HCT116 (cell line): ENCODE measurements at regions of chr7 and their contacts with region 1.

Region 1: DNA sequence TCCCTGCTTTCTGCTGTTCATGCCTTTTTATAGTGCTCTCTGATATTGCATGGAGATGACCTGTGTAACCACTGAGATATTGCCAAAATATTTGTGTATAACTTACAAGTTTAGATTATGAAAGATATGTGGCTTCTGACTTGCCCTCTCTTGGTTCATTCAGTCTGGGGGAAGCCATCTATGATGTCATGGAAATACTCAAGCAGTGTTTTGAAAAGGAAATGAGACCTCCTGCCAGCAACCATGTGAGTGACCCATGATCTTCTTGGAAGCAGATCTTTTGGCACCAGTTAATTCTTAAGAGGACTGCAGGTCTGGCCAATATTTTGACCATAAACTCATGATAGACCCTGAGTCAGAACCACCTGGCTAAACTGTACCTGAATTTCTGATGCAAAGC is 183.0 kb downstream of the THSD7A start:
- DNase-seq: no peak
- ATAC-seq: no peak
- H3K4me3 ChIP-seq: no peak overlapping the region
- H3K27ac ChIP-seq: no peak overlapping the region
- H3K4me1 ChIP-seq: no peaks in the 10 kb centered on the region
- H3K27me3 ChIP-seq: no peaks in the 10 kb centered on the region
- CTCF ChIP-seq: no peak
- POLR2A ChIP-seq: no peak
- RAD21 ChIP-seq: no peak

Region 2: DNA sequence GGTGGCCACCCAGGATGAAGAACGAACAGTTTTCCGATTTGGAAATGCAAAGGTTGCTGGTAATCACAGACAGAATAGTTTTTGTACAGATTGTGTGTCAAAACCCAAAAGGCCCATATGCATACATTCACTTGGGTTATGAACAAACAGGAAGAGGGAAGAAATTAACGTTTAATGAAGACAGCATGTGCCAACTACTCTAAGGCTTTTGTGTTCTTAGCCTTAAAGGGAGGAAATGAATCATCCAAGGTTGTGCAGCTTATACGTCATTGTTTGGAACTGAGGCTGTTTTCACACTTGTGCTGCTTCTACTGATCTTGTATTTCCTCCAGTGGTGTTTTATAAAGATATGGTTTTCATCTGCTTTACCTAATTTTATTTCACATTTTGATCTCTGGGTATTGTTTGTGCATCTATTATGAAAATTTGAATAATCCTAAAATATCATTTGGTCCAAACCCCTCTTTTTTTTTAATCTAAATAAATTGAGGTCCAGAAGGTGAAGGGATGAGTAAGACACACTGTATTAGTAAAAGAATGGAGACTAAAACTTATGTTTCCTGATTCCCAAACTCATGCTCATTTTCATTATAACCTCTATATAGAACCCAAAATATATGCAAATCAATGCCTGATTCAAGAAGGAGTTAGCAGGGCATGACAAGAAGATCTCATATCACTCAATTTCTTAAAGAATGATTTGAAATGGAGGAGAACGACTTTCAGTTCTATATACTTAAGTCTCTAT is 190.1 kb before region 1 on chr7:
- CTCF ChIA-PET with region 1: no interaction called
- POLR2A ChIA-PET with region 1: no interaction called
- RAD21 ChIA-PET with region 1: no interaction called
- intact Hi-C with region 1: no loop called
- DNase-seq: no peak
- ATAC-seq: no peak
- H3K4me3 ChIP-seq: no peak overlapping the region
- H3K27ac ChIP-seq: no peak overlapping the region
- H3K4me1 ChIP-seq: peaks cover 0 to 9% of the 10 kb centered on the region in 2 experiments; a peak in 1 of 4 replicates
- H3K27me3 ChIP-seq: no peaks in the 10 kb centered on the region
- CTCF ChIP-seq: no peak
- POLR2A ChIP-seq: no peak
- RAD21 ChIP-seq: no peak

Region 3: GRCh38 chr7:11726794-11727155 is 77.8 kb after region 1 on chr7:
- CTCF ChIA-PET with region 1: no interaction called
- POLR2A ChIA-PET with region 1: no interaction called
- RAD21 ChIA-PET with region 1: no interaction called
- intact Hi-C with region 1: loop called (anchors 5 kb)
- DNase-seq: no peak
- ATAC-seq: no peak
- H3K4me3 ChIP-seq: no peak overlapping the region
- H3K27ac ChIP-seq: no peak overlapping the region
- H3K4me1 ChIP-seq: no peaks in the 10 kb centered on the region
- H3K27me3 ChIP-seq: no peaks in the 10 kb centered on the region
- CTCF ChIP-seq: no peak
- POLR2A ChIP-seq: no peak
- RAD21 ChIP-seq: no peak

Region 4: GRCh38 chr7:12013983-12014382 is 365.0 kb after region 1 on chr7:
- CTCF ChIA-PET with region 1: no interaction called
- POLR2A ChIA-PET with region 1: no interaction called
- RAD21 ChIA-PET with region 1: no interaction called
- intact Hi-C with region 1: no loop called
- DNase-seq: no peak
- ATAC-seq: no peak
- H3K4me3 ChIP-seq: no peak overlapping the region
- H3K27ac ChIP-seq: no peak overlapping the region
- H3K4me1 ChIP-seq: no peaks in the 10 kb centered on the region
- H3K27me3 ChIP-seq: no peaks in the 10 kb centered on the region
- CTCF ChIP-seq: no peak
- POLR2A ChIP-seq: no peak
- RAD21 ChIP-seq: no peak